ENCODE measurements at regions of chr3 and their contacts with region 1.

Region 1: DNA sequence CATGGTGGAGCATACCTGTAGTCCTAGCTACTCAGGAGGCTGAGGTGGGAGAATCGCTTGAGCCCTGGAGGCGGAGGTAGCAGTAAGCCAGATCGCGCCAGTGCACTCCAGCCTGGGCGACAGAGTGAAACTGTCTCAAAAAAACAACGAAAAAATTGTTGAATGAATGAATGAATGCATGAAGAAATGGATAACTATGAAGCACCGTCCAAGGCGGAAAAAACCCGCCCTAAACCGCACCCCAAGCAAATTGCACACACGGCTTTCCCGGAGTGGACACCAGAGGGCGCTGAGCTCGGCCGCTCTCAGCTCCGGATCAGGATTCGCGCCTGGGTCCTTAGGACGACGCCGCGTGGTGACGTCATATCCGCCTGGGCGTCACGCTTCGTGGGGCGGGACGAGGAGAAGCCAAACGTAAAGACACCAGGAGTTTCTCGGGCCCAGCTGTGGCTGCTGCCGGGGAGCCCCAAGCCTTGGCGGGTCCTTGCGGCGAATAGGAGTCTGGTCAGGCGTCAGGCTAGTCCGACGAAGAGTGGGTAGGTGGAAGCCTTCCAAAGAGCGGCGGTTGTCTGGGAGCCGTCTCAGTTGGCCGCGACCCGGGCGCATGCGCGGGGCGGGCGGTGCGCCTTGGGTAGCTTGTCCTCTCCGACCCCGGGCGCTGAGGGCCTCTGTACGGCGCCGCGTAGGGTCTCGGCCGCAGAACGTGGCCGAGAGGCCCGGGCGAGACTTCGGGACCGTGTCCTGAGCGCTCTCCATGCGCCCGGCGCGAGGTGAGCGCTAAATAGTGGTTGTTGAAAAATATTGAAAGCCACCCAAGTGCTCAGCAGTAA is at the starts of genes HTD2 and RPP14:
- DNase-seq: peak; percentile 96 to 100 (median 98)

Region 2: GRCh38 chr3:57983734-57984518 is 322.2 kb before region 1 on chr3:
- intact Hi-C with region 1: no loop called
- DNase-seq: peak in 1 of 10 donors; percentile 45

Region 3: GRCh38 chr3:58008140-58009025 is 297.7 kb before region 1 on chr3 and contains the start of gene FLNB:
- intact Hi-C with region 1: loop called (anchors 10 kb)
- DNase-seq: peak; percentile 48 to 95 (median 66)

Region 4: DNA sequence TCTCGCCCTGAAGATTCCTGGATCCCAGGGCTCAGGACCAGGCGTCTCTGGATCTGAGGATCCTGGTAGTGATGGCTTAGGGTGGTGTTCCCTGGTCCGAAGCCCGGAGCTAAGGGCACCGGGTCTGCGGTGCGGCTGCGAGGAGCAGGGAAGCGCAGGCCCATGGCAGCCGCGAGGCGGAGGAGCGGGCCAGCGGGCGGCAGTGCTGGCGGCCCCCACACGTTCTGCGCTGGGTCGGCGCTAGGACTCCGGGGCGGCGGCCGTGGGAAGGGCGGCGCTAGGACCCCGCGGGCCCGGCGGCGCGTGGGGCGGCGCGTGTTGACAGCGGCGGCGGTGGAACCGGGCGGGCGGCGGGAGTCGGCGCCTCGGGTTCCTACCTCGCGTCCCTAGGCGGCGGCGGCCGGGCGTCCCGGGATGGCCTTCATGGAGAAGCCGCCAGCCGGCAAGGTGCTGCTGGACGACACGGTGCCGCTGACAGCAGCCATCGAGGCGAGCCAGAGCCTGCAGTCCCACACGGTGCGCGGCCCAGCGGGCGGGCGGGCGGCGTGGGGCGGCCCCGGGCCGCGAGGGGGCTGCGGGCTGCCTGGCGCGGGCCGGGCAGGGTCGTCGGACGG is 26.6 kb after region 1 on chr3 and contains the start of gene PXK:
- intact Hi-C with region 1: loop called (anchors 2 kb)
- DNase-seq: peak; percentile 79 to 98 (median 88)

Region 5: DNA sequence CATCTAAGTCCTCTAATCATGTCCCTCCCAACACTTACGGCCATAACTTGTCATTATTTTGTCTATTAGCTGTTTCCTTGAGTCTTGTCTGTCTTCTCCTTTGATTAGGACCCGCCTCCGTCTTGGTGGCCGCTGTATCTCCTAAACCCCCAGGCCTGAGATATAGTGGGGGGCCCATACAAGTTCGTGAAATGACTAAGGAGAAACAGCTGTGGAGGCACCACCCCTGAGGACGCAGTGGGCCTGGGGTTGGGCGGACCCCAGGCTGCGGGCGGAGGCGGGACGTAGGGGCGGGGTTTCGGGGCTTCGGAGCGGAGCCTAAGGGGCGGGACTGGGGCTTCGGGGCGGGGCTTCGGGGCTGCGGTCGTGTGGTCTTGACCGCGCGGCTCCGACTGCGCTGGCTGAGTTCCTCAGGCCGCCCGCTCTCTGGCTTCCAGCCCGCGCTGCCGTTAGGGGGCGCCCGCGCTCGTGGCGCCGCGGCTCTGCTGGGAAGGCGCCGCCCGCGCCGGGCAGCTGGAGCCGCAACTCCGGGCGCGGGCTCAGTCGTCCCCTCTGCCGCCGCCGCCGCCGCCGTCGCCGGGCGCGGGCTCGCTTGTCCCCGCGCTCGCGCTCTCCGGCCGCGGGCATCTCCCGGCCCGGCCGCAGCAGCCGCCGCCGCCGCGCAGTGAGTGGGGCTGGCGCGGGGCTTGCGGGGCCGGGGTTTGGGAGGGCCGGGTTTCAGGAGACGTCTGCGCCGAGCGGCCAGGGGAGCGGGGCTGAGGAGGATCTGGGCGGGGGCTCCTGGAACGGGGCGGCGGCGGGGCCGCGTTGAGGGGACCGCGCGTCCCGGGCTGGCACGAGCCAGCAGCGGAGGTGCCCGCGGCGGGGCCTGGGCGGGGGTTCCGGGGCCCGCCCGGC is 185.7 kb after region 1 on chr3 and contains the start of gene KCTD6:
- intact Hi-C with region 1: loop called (anchors 2 kb)
- DNase-seq: peak; percentile 79 to 98 (median 84)

Region 6: DNA sequence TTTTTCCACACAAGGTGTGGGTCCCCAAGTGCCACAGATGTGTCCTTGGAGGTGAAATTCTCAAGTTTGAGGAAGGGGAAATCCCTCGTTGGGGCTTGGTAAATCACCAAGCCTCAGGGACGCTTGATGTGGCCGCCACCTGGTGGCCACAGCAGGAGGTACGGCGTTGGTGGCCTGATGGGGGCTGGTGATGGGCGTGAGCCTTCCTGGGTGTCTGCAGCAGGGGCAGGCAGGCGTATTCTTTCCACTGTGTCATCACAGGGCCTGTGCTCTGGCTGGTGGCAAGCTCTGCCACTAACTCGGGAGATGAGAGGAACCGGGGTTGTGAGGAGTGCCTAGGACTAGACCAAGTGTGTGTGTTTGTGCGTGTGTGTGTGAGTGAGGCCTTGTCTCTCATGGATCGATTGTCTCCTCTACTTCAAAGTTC is 226.7 kb after region 1 on chr3:
- intact Hi-C with region 1: loop called (anchors 2 kb)
- DNase-seq: peak; percentile 49 to 96 (median 76)

Region 7: DNA sequence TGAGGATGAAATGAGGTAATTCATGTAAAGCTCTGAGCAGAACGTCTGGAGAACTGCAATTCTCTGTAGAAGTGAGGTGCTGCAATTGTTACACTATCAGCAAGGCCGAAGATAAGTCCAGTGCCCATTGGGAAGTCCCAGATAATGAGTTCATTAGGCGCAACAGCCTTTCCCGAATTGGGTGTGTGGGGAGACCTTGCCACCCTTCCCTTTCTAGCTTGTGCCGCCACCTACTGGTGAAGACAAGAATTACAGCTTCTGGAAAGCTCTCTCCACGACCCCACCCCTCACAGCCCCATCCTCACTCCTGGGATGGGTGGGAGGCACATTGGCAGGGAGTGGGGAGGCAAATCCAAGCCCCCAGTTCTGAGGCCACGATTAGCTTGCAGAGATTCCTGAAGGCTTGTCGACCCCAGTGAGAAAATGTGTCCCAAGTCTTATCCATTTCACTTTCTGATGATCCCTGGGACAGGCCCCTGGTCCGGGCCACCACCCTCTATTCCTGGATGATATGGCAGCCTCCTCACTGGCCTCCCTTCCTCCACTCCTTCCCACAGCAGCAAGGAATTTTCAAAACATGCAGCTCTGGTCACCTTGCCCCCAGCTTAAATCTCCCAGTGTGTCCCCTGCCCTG is 324.1 kb after region 1 on chr3:
- intact Hi-C with region 1: loop called (anchors 2 kb)
- DNase-seq: peak in 8 of 10 donors; percentile 35 to 88 (median 75)